ENCODE measurements at regions of chr1 and their contacts with region 1.

Region 1: GRCh38 chr1:67149179-67149770 is 14.5 kb upstream of the C1orf141 start:
- DNase-seq: peak; percentile 65
- H3K4me3 Mint-ChIP-seq: no peak overlapping the region
- H3K27ac Mint-ChIP-seq: no peak overlapping the region
- H3K4me1 Mint-ChIP-seq: peaks cover 29% of the 10 kb centered on the region
- H3K27me3 Mint-ChIP-seq: peaks cover 22% of the 10 kb centered on the region

Region 2: DNA sequence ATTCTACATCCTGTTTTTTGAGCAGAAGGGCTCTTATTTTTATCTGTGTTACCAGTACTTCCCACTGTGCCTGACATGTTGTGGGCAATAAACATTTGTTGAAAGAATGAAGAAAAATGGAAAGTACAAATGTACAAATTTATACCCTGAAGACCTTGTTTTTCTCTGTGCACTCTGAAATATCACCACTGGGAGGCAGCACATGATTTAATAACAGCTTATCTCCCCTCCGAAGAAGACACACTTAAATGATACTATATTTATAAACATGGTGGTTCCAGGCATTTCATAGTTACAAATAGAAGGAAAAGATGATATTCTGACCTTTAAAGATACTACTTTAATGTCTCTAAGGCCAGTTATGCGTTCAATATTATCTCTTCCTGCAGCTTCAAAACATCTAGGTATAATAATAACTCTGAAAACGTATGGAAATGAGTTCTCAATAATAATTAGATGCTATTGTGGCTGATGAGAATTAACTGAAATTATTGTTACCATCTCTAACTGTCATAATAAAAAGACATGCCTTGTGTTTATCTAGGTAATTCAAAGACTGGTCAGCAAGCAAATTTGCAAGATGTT is 384.2 kb before region 1 on chr1:
- CTCF ChIA-PET with region 1: interaction called, 29 read pairs
- POLR2A ChIA-PET with region 1: interaction called, 3 read pairs
- DNase-seq: peak; percentile 54
- H3K4me3 Mint-ChIP-seq: no peak overlapping the region
- H3K27ac Mint-ChIP-seq: no peak overlapping the region
- H3K4me1 Mint-ChIP-seq: peaks cover 15% of the 10 kb centered on the region
- H3K27me3 Mint-ChIP-seq: peaks cover 9% of the 10 kb centered on the region

Region 3: GRCh38 chr1:66996018-66996682 is 153.1 kb before region 1 on chr1:
- CTCF ChIA-PET with region 1: interaction called, 31 read pairs
- POLR2A ChIA-PET with region 1: interaction called, 5 read pairs
- DNase-seq: peak; percentile 72
- H3K4me3 Mint-ChIP-seq: no peak overlapping the region
- H3K27ac Mint-ChIP-seq: no peak overlapping the region
- H3K4me1 Mint-ChIP-seq: peaks cover 19% of the 10 kb centered on the region
- H3K27me3 Mint-ChIP-seq: no peaks in the 10 kb centered on the region

Region 4: DNA sequence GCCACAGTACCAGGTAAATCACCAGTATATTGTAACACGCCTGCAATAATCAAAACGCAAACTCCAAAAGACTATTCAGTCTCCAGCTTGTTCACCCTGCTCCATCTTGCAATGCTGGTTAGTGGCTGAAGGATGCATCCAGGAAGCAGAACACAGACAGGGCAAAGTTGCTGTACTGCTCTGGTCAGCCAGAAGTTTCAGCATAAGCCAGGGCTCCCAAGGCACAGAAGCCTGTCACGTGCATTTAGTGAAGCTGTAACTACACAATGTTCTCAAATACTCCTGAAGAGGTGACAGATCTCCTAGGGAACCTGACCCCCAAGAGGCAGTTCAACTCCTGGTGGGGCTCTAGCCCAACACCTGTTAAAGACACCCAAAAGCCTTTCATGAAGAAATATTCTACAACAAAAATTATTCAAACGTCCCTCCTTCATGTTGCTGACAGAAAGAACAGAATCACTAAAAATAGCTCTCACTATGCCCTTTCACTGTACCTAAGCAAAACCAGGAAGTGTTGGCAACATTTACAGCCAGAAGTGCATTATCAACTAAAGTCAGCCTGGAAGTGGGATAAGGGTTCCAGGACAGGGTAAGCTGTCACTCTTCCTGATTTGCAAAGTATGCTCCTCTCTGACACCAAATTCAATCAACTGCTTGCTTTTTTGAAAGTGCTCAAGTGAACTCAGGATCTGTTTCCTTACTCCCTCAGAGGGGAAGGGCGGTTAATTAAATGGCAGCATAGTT is 147.4 kb before region 1 on chr1:
- CTCF ChIA-PET with region 1: interaction called, 31 read pairs
- POLR2A ChIA-PET with region 1: no interaction called
- DNase-seq: no peak
- H3K4me3 Mint-ChIP-seq: no peak overlapping the region
- H3K27ac Mint-ChIP-seq: no peak overlapping the region
- H3K4me1 Mint-ChIP-seq: peaks cover 14% of the 10 kb centered on the region
- H3K27me3 Mint-ChIP-seq: no peaks in the 10 kb centered on the region

Region 5: GRCh38 chr1:67162957-67163356 is 13.7 kb after region 1 on chr1:
- CTCF ChIA-PET with region 1: interaction called, 16 read pairs
- POLR2A ChIA-PET with region 1: interaction called, 10 read pairs
- DNase-seq: peak; percentile 71
- H3K4me3 Mint-ChIP-seq: peak overlapping the region; percentile 1
- H3K27ac Mint-ChIP-seq: peak overlapping the region; percentile 81
- H3K4me1 Mint-ChIP-seq: peaks cover 44% of the 10 kb centered on the region
- H3K27me3 Mint-ChIP-seq: peaks cover 1% of the 10 kb centered on the region

Region 6: GRCh38 chr1:67171978-67172377 is 22.7 kb after region 1 on chr1:
- CTCF ChIA-PET with region 1: interaction called, 4 read pairs
- POLR2A ChIA-PET with region 1: interaction called, 15 read pairs
- DNase-seq: no peak
- H3K4me3 Mint-ChIP-seq: peak overlapping the region; percentile 55
- H3K27ac Mint-ChIP-seq: peak overlapping the region; percentile 82
- H3K4me1 Mint-ChIP-seq: peaks cover 68% of the 10 kb centered on the region
- H3K27me3 Mint-ChIP-seq: peaks cover 1% of the 10 kb centered on the region